Adrenal gland (tissue), 19 donors: ENCODE measurements at regions of chr4 and their contacts with region 1.

Region 1: GRCh38 chr4:3442959-3443749 is 1.4 kb downstream of the HGFAC start:
- DNase-seq: peak in 6 of 7 donors; percentile 43 to 67 (median 59)
- H3K4me3 ChIP-seq: no peak overlapping the region
- H3K27ac ChIP-seq: no peak overlapping the region
- H3K4me1 ChIP-seq: peaks cover 0 to 3% of the 10 kb centered on the region in 2 donors
- H3K27me3 ChIP-seq: no peaks in the 10 kb centered on the region
- CTCF ChIP-seq: peak; percentile 95 to 99 (median 98)
- POLR2A ChIP-seq: no peak

Region 2: DNA sequence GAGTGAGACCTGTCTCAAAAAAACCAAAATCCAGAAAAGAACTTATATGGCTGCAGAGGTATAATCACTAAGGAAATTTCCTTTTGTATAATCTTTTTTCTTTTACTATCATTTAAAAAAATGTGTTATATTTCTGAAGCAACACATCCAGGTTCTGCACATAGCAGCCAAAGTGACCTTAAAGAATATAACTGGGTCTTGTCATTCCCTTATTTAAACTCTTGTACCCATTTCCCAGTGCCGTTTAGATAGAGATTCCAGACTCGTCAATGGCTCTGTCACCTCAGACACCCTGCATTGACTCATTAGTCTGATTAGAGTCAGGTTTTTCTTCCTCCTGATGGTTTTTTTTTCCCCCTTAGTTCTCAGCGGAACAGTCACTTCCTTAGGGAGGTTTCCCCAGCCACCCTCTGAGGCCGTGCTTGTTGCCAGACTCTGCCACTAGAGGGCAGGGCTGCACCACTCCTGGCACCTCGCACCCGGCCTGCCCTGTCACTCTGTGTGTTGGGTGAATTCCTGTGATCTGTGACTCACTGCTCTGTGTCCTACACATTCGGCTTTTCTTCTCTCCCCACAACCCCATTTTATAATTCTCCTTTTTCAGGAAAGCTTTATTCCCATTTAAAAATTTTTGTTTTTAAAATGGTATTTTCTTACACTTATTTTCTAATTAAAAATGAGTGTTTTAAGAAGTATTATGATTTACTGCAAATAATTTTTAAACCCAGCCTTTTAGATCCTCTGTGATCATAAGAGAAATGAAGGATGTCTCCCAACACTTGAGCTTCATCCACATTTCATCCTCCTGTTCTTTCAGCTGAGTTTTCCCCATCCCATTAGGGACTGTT is 336.6 kb before region 1 on chr4:
- intact Hi-C with region 1: loop called in 1 of 2 experiments (anchors 5 kb)
- DNase-seq: peak; percentile 88 to 96 (median 93)
- H3K4me3 ChIP-seq: no peak overlapping the region
- H3K27ac ChIP-seq: peak overlapping the region in 3 of 5 donors; percentile 14 to 62 (median 61)
- H3K4me1 ChIP-seq: peaks cover 3 to 17% of the 10 kb centered on the region in 2 donors
- H3K27me3 ChIP-seq: no peaks in the 10 kb centered on the region
- CTCF ChIP-seq: peak; percentile 89 to 97 (median 96)
- POLR2A ChIP-seq: no peak

Region 3: GRCh38 chr4:3193531-3194203 is 249.5 kb before region 1 on chr4:
- intact Hi-C with region 1: loop called in 1 of 2 experiments (anchors 10 kb)
- DNase-seq: peak in 1 of 7 donors; percentile 39
- H3K4me3 ChIP-seq: no peak overlapping the region
- H3K27ac ChIP-seq: no peak overlapping the region
- H3K4me1 ChIP-seq: peaks cover 0 to 3% of the 10 kb centered on the region in 2 donors
- H3K27me3 ChIP-seq: no peaks in the 10 kb centered on the region
- CTCF ChIP-seq: peak; percentile 8 to 50 (median 28)
- POLR2A ChIP-seq: no peak

Region 4: GRCh38 chr4:3324093-3324815 is 118.9 kb before region 1 on chr4:
- intact Hi-C with region 1: no loop called
- DNase-seq: peak in 4 of 7 donors; percentile 6 to 39 (median 16)
- H3K4me3 ChIP-seq: no peak overlapping the region
- H3K27ac ChIP-seq: no peak overlapping the region
- H3K4me1 ChIP-seq: peaks cover 8 to 17% of the 10 kb centered on the region in 2 donors
- H3K27me3 ChIP-seq: no peaks in the 10 kb centered on the region
- CTCF ChIP-seq: no peak
- POLR2A ChIP-seq: no peak

Region 5: DNA sequence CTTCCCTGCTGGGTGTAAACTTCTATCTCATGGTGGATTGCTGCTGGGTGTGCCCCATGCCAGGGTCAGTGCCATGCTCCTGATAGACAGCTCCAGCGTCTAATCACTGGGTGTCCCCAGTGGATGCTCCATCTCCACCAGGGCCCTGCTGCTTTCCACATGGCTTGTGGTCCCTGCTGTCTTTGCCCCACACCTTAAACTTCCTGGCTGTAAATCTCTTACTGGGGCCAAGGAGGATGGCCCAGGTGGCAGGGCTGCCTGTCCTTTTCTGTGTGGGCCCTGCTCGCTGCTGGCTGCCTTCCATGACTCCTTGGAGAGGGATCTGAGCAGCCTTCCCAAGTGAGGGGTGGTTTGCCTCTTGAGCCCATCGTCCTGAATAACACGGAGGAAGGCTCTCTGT is 98.6 kb before region 1 on chr4:
- intact Hi-C with region 1: loop called (anchors 2 kb)
- DNase-seq: peak in 2 of 7 donors; percentile 17 to 20
- H3K4me3 ChIP-seq: no peak overlapping the region
- H3K27ac ChIP-seq: no peak overlapping the region
- H3K4me1 ChIP-seq: peaks cover 0 to 11% of the 10 kb centered on the region in 2 donors
- H3K27me3 ChIP-seq: no peaks in the 10 kb centered on the region
- CTCF ChIP-seq: no peak
- POLR2A ChIP-seq: no peak